CD4-positive, alpha-beta memory T cell (primary cell): ENCODE measurements at regions of chr11 and their contacts with region 1.

Region 1: GRCh38 chr11:10847960-10848870 is 9.6 kb downstream of the ZBED5 start:
- DNase-seq: no peak
- H3K4me3 ChIP-seq: no peak overlapping the region
- H3K4me3 Mint-ChIP-seq: no peak overlapping the region
- H3K27ac ChIP-seq: no peak overlapping the region
- H3K27ac Mint-ChIP-seq: no peak overlapping the region
- H3K4me1 ChIP-seq: no peaks in the 10 kb centered on the region
- H3K4me1 Mint-ChIP-seq: peaks cover 6 to 14% (median 13%) of the 10 kb centered on the region in 4 donors
- H3K27me3 ChIP-seq: no peaks in the 10 kb centered on the region
- H3K27me3 Mint-ChIP-seq: no peaks in the 10 kb centered on the region

Region 2: GRCh38 chr11:10878408-10879214 is 30.4 kb after region 1 on chr11:
- CTCF ChIA-PET with region 1: interaction called, 10 read pairs
- POLR2A ChIA-PET with region 1: no interaction called
- intact Hi-C with region 1: no loop called
- DNase-seq: peak; percentile 49 to 65 (median 62)
- H3K4me3 ChIP-seq: no peak overlapping the region
- H3K4me3 Mint-ChIP-seq: no peak overlapping the region
- H3K27ac ChIP-seq: no peak overlapping the region
- H3K27ac Mint-ChIP-seq: peak overlapping the region in 4 of 7 donors; percentile 37 to 84 (median 48)
- H3K4me1 ChIP-seq: no peaks in the 10 kb centered on the region
- H3K4me1 Mint-ChIP-seq: peaks cover 6 to 12% (median 8%) of the 10 kb centered on the region in 4 donors
- H3K27me3 ChIP-seq: no peaks in the 10 kb centered on the region
- H3K27me3 Mint-ChIP-seq: no peaks in the 10 kb centered on the region